ENCODE measurements at regions of chr4 and their contacts with region 1.

Region 1: DNA sequence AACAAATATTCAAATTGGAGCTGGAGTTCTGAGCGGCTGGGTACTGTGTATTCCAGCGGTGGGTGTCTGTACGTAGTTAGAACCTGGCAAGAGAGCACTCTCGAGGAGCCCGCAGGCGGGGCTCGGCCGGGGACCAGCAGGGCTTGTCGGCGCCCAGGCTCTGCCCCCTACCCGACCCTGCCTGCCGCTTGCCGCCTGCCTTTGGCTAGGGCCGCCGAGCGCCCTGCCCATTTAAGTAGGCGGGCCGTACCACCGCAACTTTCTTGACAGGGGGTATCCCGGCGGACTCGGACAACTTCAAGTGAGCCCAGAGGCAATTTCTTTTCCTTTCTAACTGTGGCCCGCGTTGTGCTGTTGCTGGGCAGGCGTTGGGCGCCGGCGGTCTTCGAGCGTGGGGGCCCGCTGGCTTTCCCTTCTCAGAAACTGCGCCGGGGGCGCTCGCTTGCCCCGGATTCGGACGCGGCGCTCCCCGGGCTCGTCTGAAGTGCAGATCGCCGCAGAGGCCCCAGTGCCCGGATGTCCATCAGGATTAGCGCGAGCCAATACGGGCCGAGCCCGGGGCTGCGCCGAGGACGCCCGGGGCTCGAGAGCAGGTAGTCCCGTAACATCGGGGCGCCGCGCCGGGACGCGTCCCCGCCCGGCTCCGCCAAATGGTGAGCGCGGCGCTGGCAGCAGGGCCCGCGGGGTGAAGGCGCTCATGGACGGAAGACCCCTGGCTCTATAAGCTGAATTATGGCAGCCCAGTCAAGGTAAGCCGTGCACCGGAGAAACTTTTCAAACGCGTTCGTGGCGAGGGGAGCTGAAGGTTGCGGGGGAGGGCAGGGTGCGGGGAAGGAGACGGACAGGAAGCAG is 72.1 kb downstream of the AFF1 start:
- DNase-seq: peak; percentile 82 to 95 (median 88)
- ATAC-seq: peak; percentile 25
- H3K4me3 ChIP-seq: peak overlapping the region; percentile 89
- H3K4me3 Mint-ChIP-seq: peak overlapping the region; percentile 90
- H3K27ac ChIP-seq: peak overlapping the region; percentile 83 to 90
- H3K27ac Mint-ChIP-seq: peak overlapping the region; percentile 96
- H3K4me1 ChIP-seq: peaks cover 24% of the 10 kb centered on the region
- H3K4me1 Mint-ChIP-seq: peaks cover 58% of the 10 kb centered on the region
- H3K27me3 ChIP-seq: no peaks in the 10 kb centered on the region
- H3K27me3 Mint-ChIP-seq: no peaks in the 10 kb centered on the region
- CTCF ChIP-seq: peak; percentile 65

Region 2: DNA sequence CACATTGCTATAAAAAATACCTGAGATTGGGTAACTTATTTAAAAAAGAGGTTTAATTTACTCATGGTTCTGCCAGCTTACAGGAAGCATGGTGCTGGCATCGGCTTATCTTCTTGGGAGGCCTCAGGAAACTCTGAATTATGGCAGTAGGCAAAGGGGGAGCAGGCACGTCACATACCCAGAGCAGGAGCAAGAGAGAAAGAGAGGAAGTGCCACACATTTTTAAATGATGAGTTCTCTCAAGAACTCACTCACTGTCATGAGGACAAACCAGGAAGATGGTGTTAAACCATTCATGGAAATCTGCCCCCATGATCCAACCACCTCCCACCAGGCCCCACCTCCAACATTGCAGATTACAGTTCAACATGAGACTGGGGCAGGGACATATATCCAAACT is 82.1 kb before region 1 on chr4:
- CTCF ChIA-PET with region 1: interaction called, 13 read pairs
- POLR2A ChIA-PET with region 1: interaction called, 42 read pairs
- intact Hi-C with region 1: no loop called
- DNase-seq: no peak
- ATAC-seq: no peak
- H3K4me3 ChIP-seq: no peak overlapping the region
- H3K4me3 Mint-ChIP-seq: no peak overlapping the region
- H3K27ac ChIP-seq: no peak overlapping the region
- H3K27ac Mint-ChIP-seq: no peak overlapping the region
- H3K4me1 ChIP-seq: peaks cover 2% of the 10 kb centered on the region
- H3K4me1 Mint-ChIP-seq: peaks cover 4% of the 10 kb centered on the region
- H3K27me3 ChIP-seq: no peaks in the 10 kb centered on the region
- H3K27me3 Mint-ChIP-seq: no peaks in the 10 kb centered on the region
- CTCF ChIP-seq: no peak

Region 3: GRCh38 chr4:86991994-86992393 is 14.9 kb before region 1 on chr4:
- CTCF ChIA-PET with region 1: interaction called, 7 read pairs
- POLR2A ChIA-PET with region 1: interaction called, 12 read pairs
- intact Hi-C with region 1: no loop called
- DNase-seq: no peak
- ATAC-seq: no peak
- H3K4me3 ChIP-seq: no peak overlapping the region
- H3K4me3 Mint-ChIP-seq: no peak overlapping the region
- H3K27ac ChIP-seq: no peak overlapping the region
- H3K27ac Mint-ChIP-seq: no peak overlapping the region
- H3K4me1 ChIP-seq: no peaks in the 10 kb centered on the region
- H3K4me1 Mint-ChIP-seq: peaks cover 5% of the 10 kb centered on the region
- H3K27me3 ChIP-seq: no peaks in the 10 kb centered on the region
- H3K27me3 Mint-ChIP-seq: no peaks in the 10 kb centered on the region
- CTCF ChIP-seq: no peak

Region 4: GRCh38 chr4:87073199-87074120 is 66.6 kb after region 1 on chr4:
- CTCF ChIA-PET with region 1: interaction called, 3 read pairs
- POLR2A ChIA-PET with region 1: interaction called, 8 read pairs
- intact Hi-C with region 1: loop called in 1 of 2 experiments (anchors 5 kb)
- DNase-seq: peak; percentile 16 to 71 (median 42)
- ATAC-seq: peak; percentile 94
- H3K4me3 ChIP-seq: peak overlapping the region; percentile 23
- H3K4me3 Mint-ChIP-seq: peak overlapping the region; percentile 63
- H3K27ac ChIP-seq: peak overlapping the region in 1 of 2 donors; percentile 2
- H3K27ac Mint-ChIP-seq: peak overlapping the region; percentile 11
- H3K4me1 ChIP-seq: peaks cover 6% of the 10 kb centered on the region
- H3K4me1 Mint-ChIP-seq: peaks cover 70% of the 10 kb centered on the region
- H3K27me3 ChIP-seq: no peaks in the 10 kb centered on the region
- H3K27me3 Mint-ChIP-seq: no peaks in the 10 kb centered on the region
- CTCF ChIP-seq: no peak

Region 5: DNA sequence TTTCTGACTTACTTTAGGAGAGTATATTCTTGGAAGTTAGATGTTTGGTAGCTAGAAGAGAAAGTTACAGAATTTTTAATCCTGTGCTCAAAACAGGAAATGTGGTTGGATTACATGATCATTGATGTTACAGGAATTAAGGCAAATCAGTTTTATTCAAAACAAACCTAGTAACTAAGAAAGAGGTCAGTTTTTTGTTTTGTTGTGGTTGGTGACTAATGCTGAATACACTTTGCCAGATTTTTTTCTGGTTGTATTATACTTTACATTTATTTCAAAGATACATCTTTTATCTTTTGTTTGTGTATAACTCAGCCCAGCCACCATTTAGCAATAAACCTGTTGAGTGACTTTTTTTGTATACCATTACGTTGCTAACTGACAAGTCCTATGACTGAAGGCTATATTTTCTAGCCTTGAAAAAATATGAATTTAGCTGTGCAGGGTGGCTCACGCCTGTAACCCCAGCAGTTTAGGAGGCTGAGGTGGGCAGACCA is 96.8 kb after region 1 on chr4:
- CTCF ChIA-PET with region 1: interaction called, 3 read pairs
- POLR2A ChIA-PET with region 1: interaction called, 10 read pairs
- intact Hi-C with region 1: loop called in 1 of 2 experiments (anchors 1 kb)
- DNase-seq: peak in 4 of 14 experiments; percentile 8 to 75 (median 70)
- ATAC-seq: peak; percentile 77
- H3K4me3 ChIP-seq: no peak overlapping the region
- H3K4me3 Mint-ChIP-seq: peak overlapping the region; percentile 78
- H3K27ac ChIP-seq: peak overlapping the region; percentile 78 to 88
- H3K27ac Mint-ChIP-seq: peak overlapping the region; percentile 93
- H3K4me1 ChIP-seq: peaks cover 16% of the 10 kb centered on the region
- H3K4me1 Mint-ChIP-seq: peaks cover 67% of the 10 kb centered on the region
- H3K27me3 ChIP-seq: no peaks in the 10 kb centered on the region
- H3K27me3 Mint-ChIP-seq: no peaks in the 10 kb centered on the region
- CTCF ChIP-seq: no peak

Region 6: GRCh38 chr4:87422104-87423052 is 415.5 kb after region 1 on chr4 and contains the start of gene NUDT9:
- CTCF ChIA-PET with region 1: no interaction called
- POLR2A ChIA-PET with region 1: interaction called, 3 read pairs
- intact Hi-C with region 1: loop called in 1 of 2 experiments (anchors 10 kb)
- DNase-seq: peak; percentile 66 to 93 (median 80)
- ATAC-seq: peak; percentile 80
- H3K4me3 ChIP-seq: peak within 1 kb of the TSS; percentile 77
- H3K4me3 Mint-ChIP-seq: peak within 1 kb of the TSS; percentile 95
- H3K27ac ChIP-seq: peak within 1 kb of the TSS; percentile 76 to 87
- H3K27ac Mint-ChIP-seq: peak within 1 kb of the TSS; percentile 97
- H3K4me1 ChIP-seq: peaks cover 31% of the 10 kb centered on the region
- H3K4me1 Mint-ChIP-seq: peaks cover 52% of the 10 kb centered on the region
- H3K27me3 ChIP-seq: no peaks in the 10 kb centered on the region
- H3K27me3 Mint-ChIP-seq: no peaks in the 10 kb centered on the region
- CTCF ChIP-seq: peak; percentile 18
- total RNA-seq, gene NUDT9: 4.4 to 4.8 TPM

Region 7: DNA sequence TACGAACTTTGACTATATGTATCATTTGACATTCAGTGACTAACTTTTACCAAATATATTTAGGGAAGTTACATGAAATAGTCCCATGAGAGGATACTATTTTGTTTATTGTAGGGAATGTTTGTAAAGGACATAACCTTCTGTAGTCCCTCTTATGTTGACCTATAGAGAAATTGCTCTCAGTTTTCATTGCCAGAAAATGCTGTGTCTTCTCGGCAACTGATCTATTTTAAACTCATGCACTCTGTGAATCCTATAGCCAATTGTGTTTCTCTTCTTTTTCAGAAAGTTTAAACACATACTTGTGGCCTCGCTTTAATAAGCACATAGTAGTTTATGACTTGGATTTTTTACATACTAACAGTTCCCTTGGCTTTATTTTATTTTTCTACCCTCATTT is 681.4 kb after region 1 on chr4:
- CTCF ChIA-PET with region 1: no interaction called
- POLR2A ChIA-PET with region 1: no interaction called
- intact Hi-C with region 1: no loop called
- DNase-seq: no peak
- ATAC-seq: no peak
- H3K4me3 ChIP-seq: no peak overlapping the region
- H3K4me3 Mint-ChIP-seq: no peak overlapping the region
- H3K27ac ChIP-seq: no peak overlapping the region
- H3K27ac Mint-ChIP-seq: no peak overlapping the region
- H3K4me1 ChIP-seq: no peaks in the 10 kb centered on the region
- H3K4me1 Mint-ChIP-seq: no peaks in the 10 kb centered on the region
- H3K27me3 ChIP-seq: no peaks in the 10 kb centered on the region
- H3K27me3 Mint-ChIP-seq: peaks cover 21% of the 10 kb centered on the region
- CTCF ChIP-seq: no peak